ENCODE measurements at regions of chr11 and their contacts with region 1.

Region 1: GRCh38 chr11:1389103-1389931 is 417 bp upstream of the BRSK2 start:
- DNase-seq: peak; percentile 94 to 99 (median 97)

Region 2: GRCh38 chr11:1335811-1336761 is 53.2 kb before region 1 on chr11:
- intact Hi-C with region 1: loop called (anchors 10 kb)
- DNase-seq: peak; percentile 21 to 84 (median 62)

Region 3: DNA sequence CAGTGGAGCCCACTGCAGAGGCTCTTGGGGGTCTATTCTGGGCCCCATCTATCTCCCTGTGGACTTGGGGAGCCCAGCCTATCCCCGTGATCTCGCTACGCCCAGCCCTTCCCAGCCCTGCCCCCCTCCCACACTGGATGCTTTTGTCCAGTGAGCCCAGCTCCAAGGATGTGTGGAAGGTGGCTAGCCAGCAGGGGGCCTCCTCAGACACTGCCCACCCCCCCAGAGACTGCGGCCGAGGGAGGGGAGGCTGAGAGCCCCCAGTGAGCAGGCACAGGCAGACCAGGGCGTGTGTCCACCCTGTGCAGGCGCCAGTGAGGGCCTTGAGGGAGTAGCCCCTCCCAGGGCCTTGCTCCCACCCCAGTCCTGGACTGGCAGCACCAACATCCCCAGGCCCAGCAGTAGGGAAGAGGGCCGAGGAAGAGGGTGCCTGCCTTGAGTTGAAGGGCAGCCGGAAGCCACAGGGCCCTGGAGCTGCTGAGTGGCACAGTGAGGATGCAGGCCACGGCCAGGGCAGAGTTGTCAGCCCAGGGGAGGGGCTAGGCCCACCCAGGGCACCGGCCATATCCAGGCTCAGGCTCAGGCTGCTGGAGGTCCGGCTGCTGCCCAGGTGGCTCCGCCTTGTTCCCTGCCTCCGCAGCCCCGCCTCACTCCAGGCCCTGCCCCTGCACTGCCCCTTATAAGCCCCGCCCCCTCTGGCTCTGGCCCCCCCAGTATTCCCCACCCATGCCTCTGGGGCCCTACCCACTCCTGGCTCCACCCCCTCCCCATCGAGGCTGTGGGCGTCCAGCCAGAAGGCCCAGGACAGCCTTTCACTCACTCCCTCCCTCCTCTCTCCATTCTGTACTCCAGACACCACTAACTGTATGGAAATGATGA is 69.3 kb after region 1 on chr11:
- intact Hi-C with region 1: loop called (anchors 10 kb)
- DNase-seq: peak in 36 of 42 donors; percentile 23 to 74 (median 53)